ENCODE measurements at regions of chr16 and their contacts with region 1.

Region 1: GRCh38 chr16:79601931-79602627 is 1.5 kb upstream of the MAF start:
- DNase-seq: peak; percentile 51 to 78 (median 72)
- ATAC-seq: peak; percentile 20
- H3K4me3 ChIP-seq: peak overlapping the region; percentile 84
- H3K4me3 Mint-ChIP-seq: peak overlapping the region; percentile 90 to 98 (median 94)
- H3K27ac ChIP-seq: no peak overlapping the region
- H3K27ac Mint-ChIP-seq: peak overlapping the region in 7 of 9 donors; percentile 3 to 98 (median 66)
- H3K4me1 ChIP-seq: peaks cover 4 to 7% of the 10 kb centered on the region in 2 donors
- H3K4me1 Mint-ChIP-seq: peaks cover 6 to 47% (median 33%) of the 10 kb centered on the region in 7 donors
- H3K27me3 ChIP-seq: no peaks in the 10 kb centered on the region
- H3K27me3 Mint-ChIP-seq: peaks cover 15 to 24% (median 20%) of the 10 kb centered on the region in 5 donors

Region 2: DNA sequence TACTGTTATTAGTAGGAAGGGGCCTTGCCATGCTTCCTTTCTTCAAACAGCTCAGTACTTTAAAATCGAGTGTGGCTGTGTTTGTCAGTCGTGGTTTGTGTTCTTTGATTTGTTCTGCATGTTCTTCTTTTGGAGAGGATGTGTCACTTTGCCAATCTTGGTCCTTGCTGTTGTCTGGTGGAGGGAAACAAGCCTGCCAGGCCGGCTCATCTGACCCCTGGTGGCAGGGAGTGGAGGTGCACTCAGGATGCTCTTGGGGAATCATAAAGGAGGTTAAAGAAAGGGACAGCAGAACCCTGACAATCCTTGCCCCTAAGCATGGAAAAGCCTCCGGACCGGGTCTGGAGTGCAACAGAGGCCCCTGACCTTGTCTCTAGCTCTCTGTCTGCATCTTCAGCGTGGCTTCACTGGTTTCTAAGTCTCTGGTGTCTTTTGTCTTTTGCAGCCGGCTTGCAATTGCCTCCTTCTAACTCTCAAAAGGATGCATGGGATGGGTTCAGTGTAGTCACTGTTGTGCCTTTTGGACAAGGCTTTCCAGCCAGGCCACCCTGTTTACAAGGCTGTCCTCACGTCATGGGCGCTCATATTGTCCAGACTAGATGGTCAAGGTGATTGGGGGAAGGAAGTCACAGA is 1366.8 kb before region 1 on chr16:
- CTCF ChIA-PET with region 1: no interaction called
- POLR2A ChIA-PET with region 1: no interaction called
- intact Hi-C with region 1: loop called in 1 of 2 experiments (anchors 5 kb)
- DNase-seq: peak; percentile 18 to 67 (median 49)
- ATAC-seq: peak; percentile 80
- H3K4me3 ChIP-seq: no peak overlapping the region
- H3K4me3 Mint-ChIP-seq: no peak overlapping the region
- H3K27ac ChIP-seq: no peak overlapping the region
- H3K27ac Mint-ChIP-seq: no peak overlapping the region
- H3K4me1 ChIP-seq: no peaks in the 10 kb centered on the region
- H3K4me1 Mint-ChIP-seq: peaks cover 0 to 6% (median 4%) of the 10 kb centered on the region in 7 donors
- H3K27me3 ChIP-seq: no peaks in the 10 kb centered on the region
- H3K27me3 Mint-ChIP-seq: no peaks in the 10 kb centered on the region

Region 3: GRCh38 chr16:78778101-78779004 is 823.7 kb before region 1 on chr16:
- CTCF ChIA-PET with region 1: no interaction called
- POLR2A ChIA-PET with region 1: no interaction called
- intact Hi-C with region 1: loop called in 1 of 2 experiments (anchors 5 kb)
- DNase-seq: peak in 1 of 9 donors; percentile 55
- ATAC-seq: no peak
- H3K4me3 ChIP-seq: no peak overlapping the region
- H3K4me3 Mint-ChIP-seq: peak overlapping the region in 1 of 10 donors; percentile 76
- H3K27ac ChIP-seq: no peak overlapping the region
- H3K27ac Mint-ChIP-seq: peak overlapping the region in 1 of 9 donors; percentile 94
- H3K4me1 ChIP-seq: no peaks in the 10 kb centered on the region
- H3K4me1 Mint-ChIP-seq: peaks cover 0 to 52% (median 0%) of the 10 kb centered on the region in 7 donors
- H3K27me3 ChIP-seq: no peaks in the 10 kb centered on the region
- H3K27me3 Mint-ChIP-seq: no peaks in the 10 kb centered on the region

Region 4: GRCh38 chr16:79213214-79213613 is 388.9 kb before region 1 on chr16:
- CTCF ChIA-PET with region 1: no interaction called
- POLR2A ChIA-PET with region 1: no interaction called
- intact Hi-C with region 1: loop called in 1 of 2 experiments (anchors 5 kb)
- DNase-seq: no peak
- ATAC-seq: no peak
- H3K4me3 ChIP-seq: no peak overlapping the region
- H3K4me3 Mint-ChIP-seq: no peak overlapping the region
- H3K27ac ChIP-seq: no peak overlapping the region
- H3K27ac Mint-ChIP-seq: no peak overlapping the region
- H3K4me1 ChIP-seq: peaks cover 3 to 13% of the 10 kb centered on the region in 2 donors
- H3K4me1 Mint-ChIP-seq: peaks cover 2 to 19% (median 10%) of the 10 kb centered on the region in 7 donors
- H3K27me3 ChIP-seq: no peaks in the 10 kb centered on the region
- H3K27me3 Mint-ChIP-seq: no peaks in the 10 kb centered on the region

Region 5: GRCh38 chr16:79509211-79509631 is 92.9 kb before region 1 on chr16:
- CTCF ChIA-PET with region 1: no interaction called
- POLR2A ChIA-PET with region 1: no interaction called
- intact Hi-C with region 1: no loop called
- DNase-seq: no peak
- ATAC-seq: peak; percentile 48
- H3K4me3 ChIP-seq: no peak overlapping the region
- H3K4me3 Mint-ChIP-seq: no peak overlapping the region
- H3K27ac ChIP-seq: no peak overlapping the region
- H3K27ac Mint-ChIP-seq: no peak overlapping the region
- H3K4me1 ChIP-seq: no peaks in the 10 kb centered on the region
- H3K4me1 Mint-ChIP-seq: peaks cover 0 to 5% (median 0%) of the 10 kb centered on the region in 7 donors
- H3K27me3 ChIP-seq: no peaks in the 10 kb centered on the region
- H3K27me3 Mint-ChIP-seq: peaks cover 7 to 24% (median 10%) of the 10 kb centered on the region in 5 donors

Region 6: DNA sequence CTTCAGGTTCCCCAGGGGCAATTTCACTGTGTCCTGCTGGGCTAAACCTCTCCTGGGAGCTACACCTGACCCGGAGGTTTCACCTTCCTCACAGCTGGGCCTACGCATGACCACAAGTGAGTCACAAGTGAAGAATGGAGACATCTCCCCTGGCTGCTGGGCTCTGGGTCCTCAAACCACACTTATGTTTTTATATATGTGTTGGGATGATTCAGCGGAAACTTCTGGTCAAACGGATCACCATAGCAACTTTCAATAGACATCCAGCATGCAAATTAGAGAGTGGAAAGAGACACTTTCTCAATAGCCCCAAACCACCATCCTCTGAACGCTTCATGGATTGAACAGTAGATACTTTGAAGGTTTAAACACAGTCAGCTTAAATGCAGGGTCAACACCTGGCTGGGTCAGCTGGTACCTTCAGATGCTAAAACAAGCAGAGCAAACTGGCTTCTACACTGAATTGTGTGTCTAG is 26.5 kb after region 1 on chr16:
- CTCF ChIA-PET with region 1: no interaction called
- POLR2A ChIA-PET with region 1: no interaction called
- intact Hi-C with region 1: loop called in 1 of 2 experiments (anchors 1 kb)
- DNase-seq: peak in 1 of 9 donors; percentile 79
- ATAC-seq: peak; percentile 47
- H3K4me3 ChIP-seq: no peak overlapping the region
- H3K4me3 Mint-ChIP-seq: peak overlapping the region in 1 of 10 donors; percentile 73
- H3K27ac ChIP-seq: no peak overlapping the region
- H3K27ac Mint-ChIP-seq: peak overlapping the region in 1 of 9 donors; percentile 78
- H3K4me1 ChIP-seq: peaks cover 0 to 6% of the 10 kb centered on the region in 2 donors
- H3K4me1 Mint-ChIP-seq: peaks cover 0 to 61% (median 0%) of the 10 kb centered on the region in 7 donors
- H3K27me3 ChIP-seq: no peaks in the 10 kb centered on the region
- H3K27me3 Mint-ChIP-seq: peaks cover 5 to 14% (median 10%) of the 10 kb centered on the region in 5 donors

Region 7: GRCh38 chr16:80540516-80541272 is 938.6 kb after region 1 on chr16 and contains the start of gene DYNLRB2:
- CTCF ChIA-PET with region 1: no interaction called
- POLR2A ChIA-PET with region 1: no interaction called
- intact Hi-C with region 1: loop called in 1 of 2 experiments (anchors 5 kb)
- DNase-seq: peak; percentile 82 to 94 (median 93)
- ATAC-seq: peak; percentile 94
- H3K4me3 ChIP-seq: peak within 1 kb of the TSS; percentile 94
- H3K4me3 Mint-ChIP-seq: peak within 1 kb of the TSS; percentile 93 to 98 (median 96)
- H3K27ac ChIP-seq: peak within 1 kb of the TSS; percentile 77
- H3K27ac Mint-ChIP-seq: peak within 1 kb of the TSS; percentile 96 to 99 (median 97)
- H3K4me1 ChIP-seq: peaks cover 6 to 13% of the 10 kb centered on the region in 2 donors
- H3K4me1 Mint-ChIP-seq: peaks cover 16 to 33% (median 19%) of the 10 kb centered on the region in 7 donors
- H3K27me3 ChIP-seq: no peaks in the 10 kb centered on the region
- H3K27me3 Mint-ChIP-seq: peaks cover 0 to 9% (median 3%) of the 10 kb centered on the region in 5 donors
- total RNA-seq, gene DYNLRB2: 0.92 to 1.2 TPM in 2 of 5 experiments, not detected in the others

Measured in naive thymus-derived CD4-positive, alpha-beta T cell (primary cell).